Activated CD4-positive, alpha-beta memory T cell treated with anti-CD3 and anti-CD28 coated beads, Interleukin-2, amount 10 ng/mL, durations not matched to agents 7 days and 5 days (primary cell): ENCODE measurements at regions of chr7 and their contacts with region 1.

Region 1: DNA sequence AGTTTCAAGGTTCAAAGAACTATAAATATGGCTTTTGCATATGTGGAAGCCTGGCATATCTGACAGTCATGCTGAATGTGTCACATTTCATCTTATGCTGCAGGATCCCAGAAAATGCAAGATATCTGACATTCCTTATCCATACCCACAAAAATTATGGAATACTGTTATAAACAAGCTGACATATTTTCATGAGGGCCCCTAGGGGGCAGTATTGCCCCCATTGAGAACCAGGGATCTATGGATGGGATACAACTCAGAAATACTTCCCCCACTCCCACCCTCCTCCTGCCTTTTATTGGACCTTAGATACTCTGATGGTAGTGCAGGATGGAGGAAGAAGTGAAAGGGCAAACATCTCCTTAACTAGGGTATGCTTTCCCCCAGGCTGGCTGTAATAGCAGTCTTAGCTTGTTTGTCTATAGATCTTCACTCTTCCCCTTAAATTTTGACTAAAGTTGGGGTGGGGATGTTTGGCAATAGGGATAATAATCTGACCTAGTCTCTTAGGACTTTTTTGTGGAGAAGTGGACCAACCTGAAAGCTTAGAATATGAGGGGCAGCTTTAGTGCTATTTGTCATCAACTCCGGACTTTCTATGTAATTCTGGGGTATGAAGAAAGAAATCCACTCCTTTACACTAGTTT is 3.5 kb upstream of the GNGT1 start:
- DNase-seq: no peak
- H3K4me3 Mint-ChIP-seq: no peak overlapping the region
- H3K27ac Mint-ChIP-seq: no peak overlapping the region
- H3K4me1 Mint-ChIP-seq: no peaks in the 10 kb centered on the region
- H3K27me3 Mint-ChIP-seq: peaks cover 7% of the 10 kb centered on the region

Region 2: GRCh38 chr7:94087664-94088352 is 184.9 kb after region 1 on chr7:
- CTCF ChIA-PET with region 1: interaction called, 11 read pairs
- POLR2A ChIA-PET with region 1: no interaction called
- DNase-seq: peak; percentile 59
- H3K4me3 Mint-ChIP-seq: peak overlapping the region; percentile 35
- H3K27ac Mint-ChIP-seq: no peak overlapping the region
- H3K4me1 Mint-ChIP-seq: peaks cover 4% of the 10 kb centered on the region
- H3K27me3 Mint-ChIP-seq: peaks cover 48% of the 10 kb centered on the region